Activated T-helper 1 cell treated with anti-CD3 and anti-CD28 coated beads, Interleukin-12 subunit alpha, Interleukin-12 subunit beta, Interleukin-2, Interleukin-4 antibody, amounts not matched to agents 30 ng/mL and 10 ng/mL and 1 ng/mL, durations not matched to agents 14 hours and 24 hours and 36 hours (primary cell): ENCODE measurements at regions of chr17 and their contacts with region 1.

Region 1: GRCh38 chr17:40317880-40318829 is 9.2 kb downstream of the RARA start:
- DNase-seq: peak; percentile 87
- H3K4me3 Mint-ChIP-seq: peak overlapping the region; percentile 95
- H3K27ac Mint-ChIP-seq: peak overlapping the region; percentile 92
- H3K4me1 Mint-ChIP-seq: peaks cover 91% of the 10 kb centered on the region
- H3K27me3 Mint-ChIP-seq: peaks cover 3% of the 10 kb centered on the region

Region 2: DNA sequence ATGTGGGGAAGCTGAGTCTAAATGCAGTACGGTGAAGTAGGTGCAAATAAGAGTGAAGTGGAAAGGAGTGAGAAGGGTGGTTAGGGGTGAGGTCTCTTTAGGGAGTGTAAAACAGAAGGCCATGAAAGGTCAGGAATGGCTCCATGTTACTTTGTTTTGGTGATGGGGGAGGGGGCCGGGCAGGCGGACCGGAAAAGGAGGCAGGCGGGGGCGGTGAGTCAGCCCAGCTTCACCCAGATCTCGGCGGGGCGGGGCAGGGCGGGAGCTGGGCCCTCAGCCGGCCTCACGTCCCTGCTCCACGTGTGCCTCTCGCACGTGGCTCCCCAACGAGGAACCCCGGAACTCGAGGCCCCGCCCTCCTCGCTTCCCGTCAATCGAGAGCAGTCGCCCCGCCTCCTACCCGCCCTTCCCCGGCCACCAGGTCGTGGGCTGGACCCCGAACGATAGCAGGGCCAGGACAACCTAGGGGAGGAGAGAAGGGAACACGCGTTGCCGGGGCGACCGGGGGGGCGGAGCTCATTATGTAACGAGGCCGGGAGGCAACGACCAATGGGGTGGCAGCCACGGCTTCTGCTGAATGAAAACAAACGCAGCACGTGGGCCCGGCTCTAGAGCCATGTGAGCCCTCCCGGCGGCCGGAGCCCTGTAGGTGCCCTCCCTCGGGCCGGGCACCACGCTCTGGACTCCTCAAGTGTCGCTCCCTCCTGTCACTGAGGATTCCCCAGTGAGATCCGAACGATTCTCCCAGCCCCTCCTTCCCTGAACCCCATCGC is 219.1 kb before region 1 on chr17:
- intact Hi-C with region 1: loop called (anchors 2 kb)
- DNase-seq: peak; percentile 86
- H3K4me3 Mint-ChIP-seq: peak overlapping the region; percentile 92
- H3K27ac Mint-ChIP-seq: peak overlapping the region; percentile 85
- H3K4me1 Mint-ChIP-seq: peaks cover 81% of the 10 kb centered on the region
- H3K27me3 Mint-ChIP-seq: peaks cover 11% of the 10 kb centered on the region

Region 3: DNA sequence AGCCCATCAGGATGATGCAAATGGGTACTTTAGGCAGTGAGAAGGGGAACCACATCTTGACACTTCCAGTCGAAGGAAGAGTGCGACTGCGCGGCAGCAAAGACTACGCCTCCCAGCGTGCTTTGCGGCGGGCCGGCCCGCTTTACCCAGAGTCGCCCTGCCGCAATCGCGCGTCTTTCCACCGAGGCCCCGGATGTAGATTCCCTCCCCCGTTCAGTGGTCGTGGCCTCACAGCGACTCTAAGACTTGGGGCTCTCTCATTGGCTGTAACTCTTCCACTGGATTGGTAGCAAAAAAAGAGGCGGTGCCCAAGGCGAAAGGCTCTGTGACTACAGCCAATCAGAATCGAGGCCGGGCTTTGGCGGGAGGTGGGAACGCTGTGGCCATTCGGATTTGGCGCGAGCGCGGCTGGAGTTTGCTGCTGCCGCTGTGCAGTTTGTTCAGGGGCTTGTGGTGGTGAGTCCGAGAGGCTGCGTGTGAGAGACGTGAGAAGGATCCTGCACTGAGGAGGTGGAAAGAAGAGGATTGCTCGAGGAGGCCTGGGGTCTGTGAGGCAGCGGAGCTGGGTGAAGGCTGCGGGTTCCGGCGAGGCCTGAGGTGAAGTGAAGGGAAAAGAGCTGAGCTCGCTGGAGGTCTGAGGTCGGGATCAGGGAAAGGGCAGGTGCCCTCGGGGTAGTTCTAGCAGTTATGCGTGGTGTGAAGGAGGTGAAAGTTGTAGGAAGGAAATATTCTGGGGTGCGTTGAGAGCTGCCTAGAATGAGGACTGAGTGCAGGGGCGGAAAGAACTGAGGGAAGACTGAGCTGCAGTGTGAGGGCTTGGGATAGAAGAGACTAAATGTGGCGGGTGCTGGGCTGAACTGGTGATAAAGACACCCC is 30.4 kb before region 1 on chr17 and contains the start of gene CDC6:
- intact Hi-C with region 1: loop called (anchors 1 kb)
- DNase-seq: peak; percentile 98
- H3K4me3 Mint-ChIP-seq: peak within 1 kb of the TSS; percentile 99
- H3K27ac Mint-ChIP-seq: peak within 1 kb of the TSS; percentile 98
- H3K4me1 Mint-ChIP-seq: peaks cover 39% of the 10 kb centered on the region
- H3K27me3 Mint-ChIP-seq: no peaks in the 10 kb centered on the region
- total RNA-seq, gene CDC6: 130 and 135 TPM in 2 replicates

Region 4: GRCh38 chr17:40340880-40341807 is 23.0 kb after region 1 on chr17:
- intact Hi-C with region 1: loop called (anchors 1 kb)
- DNase-seq: peak; percentile 79
- H3K4me3 Mint-ChIP-seq: peak overlapping the region; percentile 77
- H3K27ac Mint-ChIP-seq: peak overlapping the region; percentile 86
- H3K4me1 Mint-ChIP-seq: peaks cover 69% of the 10 kb centered on the region
- H3K27me3 Mint-ChIP-seq: no peaks in the 10 kb centered on the region

Region 5: GRCh38 chr17:40417609-40418427 is 99.7 kb after region 1 on chr17 and contains the start of gene TOP2A:
- intact Hi-C with region 1: loop called (anchors 1 kb)
- DNase-seq: peak; percentile 97
- H3K4me3 Mint-ChIP-seq: peak within 1 kb of the TSS; percentile 96
- H3K27ac Mint-ChIP-seq: peak within 1 kb of the TSS; percentile 92
- H3K4me1 Mint-ChIP-seq: peaks cover 35% of the 10 kb centered on the region
- H3K27me3 Mint-ChIP-seq: peaks cover 2% of the 10 kb centered on the region
- total RNA-seq, gene TOP2A: 161 and 174 TPM in 2 replicates

Region 6: DNA sequence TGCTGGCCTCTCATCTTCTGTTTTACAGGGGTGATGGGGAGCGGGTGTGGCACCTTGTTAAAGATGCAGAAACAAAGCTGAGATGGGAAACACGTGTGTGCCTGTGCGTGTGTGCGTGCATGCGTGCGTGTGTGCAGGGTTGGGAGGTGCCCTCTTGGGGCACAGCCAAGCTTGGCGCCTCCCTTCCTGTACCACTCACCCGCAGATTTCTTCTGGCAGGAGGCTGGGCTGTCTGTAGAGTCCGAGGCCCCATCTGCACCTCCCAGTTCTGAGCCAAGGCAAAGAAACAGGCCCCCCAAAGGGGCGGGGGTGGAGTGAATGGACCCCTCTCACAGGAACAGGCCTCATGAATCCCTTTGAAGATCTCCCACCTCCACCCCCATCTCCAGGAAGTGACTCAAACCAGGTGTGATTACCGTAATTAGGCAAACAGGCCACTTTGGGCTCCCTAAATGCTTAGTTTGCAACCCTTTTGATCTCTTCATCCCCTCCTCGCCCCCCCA is 162.4 kb after region 1 on chr17:
- intact Hi-C with region 1: loop called (anchors 2 kb)
- DNase-seq: peak; percentile 76
- H3K4me3 Mint-ChIP-seq: peak overlapping the region; percentile 84
- H3K27ac Mint-ChIP-seq: peak overlapping the region; percentile 99
- H3K4me1 Mint-ChIP-seq: peaks cover 84% of the 10 kb centered on the region
- H3K27me3 Mint-ChIP-seq: no peaks in the 10 kb centered on the region

Region 7: DNA sequence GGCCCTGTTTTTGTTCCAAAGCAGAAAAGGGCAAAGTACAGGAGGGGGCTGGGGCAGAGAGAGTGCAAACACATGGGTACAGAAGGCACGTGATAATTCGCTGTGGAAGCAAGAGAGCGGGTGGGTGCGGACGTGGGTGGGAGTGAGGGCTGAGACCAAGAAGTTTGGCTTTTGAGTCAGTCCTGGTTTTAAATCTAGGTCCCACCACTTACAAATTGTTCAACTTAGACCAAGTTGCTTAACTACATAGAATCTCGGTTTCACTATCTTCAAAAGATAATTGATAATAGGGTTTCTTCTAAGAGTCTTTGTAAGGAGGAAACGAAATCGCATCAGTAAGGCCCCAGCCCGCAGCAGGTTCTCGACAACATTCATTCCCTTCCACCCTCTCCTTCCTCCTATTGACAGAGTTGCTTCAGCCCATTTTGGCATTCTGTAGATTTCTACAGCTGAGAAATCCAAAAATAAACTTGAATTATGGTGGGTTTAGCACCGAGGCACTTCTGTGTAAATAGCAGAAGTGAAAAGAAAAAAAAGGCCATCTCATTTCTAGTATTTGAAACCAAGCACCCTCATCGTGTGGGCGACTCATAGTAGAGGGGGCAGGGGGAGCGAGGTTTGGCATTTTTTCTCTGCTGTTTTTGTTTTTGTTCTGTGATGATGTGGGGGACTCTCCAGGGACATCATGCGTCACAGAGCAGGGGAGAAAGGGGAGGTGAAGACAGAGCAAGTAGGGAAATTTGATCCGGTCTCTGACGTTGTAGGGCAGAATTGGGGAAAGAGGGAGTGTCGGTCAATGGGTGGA is 280.7 kb after region 1 on chr17:
- intact Hi-C with region 1: loop called (anchors 2 kb)
- DNase-seq: peak; percentile 56
- H3K4me3 Mint-ChIP-seq: peak overlapping the region; percentile 46
- H3K27ac Mint-ChIP-seq: peak overlapping the region; percentile 89
- H3K4me1 Mint-ChIP-seq: peaks cover 87% of the 10 kb centered on the region
- H3K27me3 Mint-ChIP-seq: no peaks in the 10 kb centered on the region

Region 8: DNA sequence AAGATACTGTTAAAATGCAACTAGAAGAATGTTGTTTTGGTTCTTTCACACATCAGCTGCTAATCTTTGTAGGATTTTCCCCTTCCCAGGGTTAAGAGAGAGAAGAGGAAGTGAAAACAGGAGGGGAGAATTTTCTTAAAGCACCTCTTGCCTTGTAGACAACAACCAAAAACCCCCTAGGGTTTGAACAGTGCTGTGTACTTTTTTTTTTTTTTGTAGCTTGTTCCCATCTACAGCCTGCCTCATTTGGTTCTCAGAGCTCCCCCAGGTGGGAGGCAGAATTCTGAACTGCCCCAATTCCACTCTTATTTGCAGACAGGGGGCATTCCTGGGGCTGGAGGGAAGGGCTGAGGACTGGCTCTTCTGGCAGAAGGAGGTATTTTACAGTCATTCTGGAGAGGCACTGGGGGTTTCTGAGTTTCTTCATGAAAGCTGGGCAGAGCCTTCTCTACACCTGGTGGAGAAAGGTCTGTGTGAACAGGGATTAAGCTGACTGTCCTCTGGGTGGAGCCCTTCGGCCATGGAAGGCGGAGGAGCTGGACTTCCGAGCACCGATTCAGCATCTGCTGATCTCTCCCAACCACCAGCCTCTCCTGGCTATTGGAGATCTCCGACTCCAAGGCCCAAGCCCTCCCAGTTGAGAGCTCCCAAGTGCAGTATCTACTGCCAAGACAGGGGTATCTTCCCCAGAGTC is 297.3 kb after region 1 on chr17:
- intact Hi-C with region 1: no loop called
- DNase-seq: peak; percentile 30
- H3K4me3 Mint-ChIP-seq: peak overlapping the region; percentile 38
- H3K27ac Mint-ChIP-seq: peak overlapping the region; percentile 95
- H3K4me1 Mint-ChIP-seq: peaks cover 84% of the 10 kb centered on the region
- H3K27me3 Mint-ChIP-seq: peaks cover 3% of the 10 kb centered on the region